K562 (cell line): ENCODE measurements at regions of chr5 and their contacts with region 1.

Region 1: GRCh38 chr5:178838695-178839685 is 20.8 kb upstream of the ZNF354B start:
- DNase-seq: peak; percentile 27 to 57 (median 32)
- ATAC-seq: peak; percentile 96
- H3K4me3 ChIP-seq: no peak overlapping the region
- H3K27ac ChIP-seq: no peak overlapping the region
- H3K4me1 ChIP-seq: peaks cover 0 to 5% of the 10 kb centered on the region in 2 experiments; a peak in 1 of 5 replicates
- H3K27me3 ChIP-seq: peaks cover 0 to 4% of the 10 kb centered on the region in 2 experiments; a peak in 1 of 5 replicates
- CTCF ChIP-seq: peak; percentile 69 to 70 (median 69)
- EP300 ChIP-seq: no peak
- POLR2A ChIP-seq: no peak
- RAD21 ChIP-seq: peak; percentile 54 to 68

Region 2: GRCh38 chr5:178232124-178232919 is 606.7 kb before region 1 on chr5 and contains the start of gene PHYKPL:
- CTCF ChIA-PET with region 1: interaction called, 4 read pairs
- POLR2A ChIA-PET with region 1: no interaction called
- in situ Hi-C with region 1: no loop called
- intact Hi-C with region 1: loop called (anchors 5 kb)
- DNase-seq: peak; percentile 77 to 92 (median 86)
- ATAC-seq: peak; percentile 79
- H3K4me3 ChIP-seq: peak within 1 kb of the TSS; percentile 93
- H3K27ac ChIP-seq: peak within 1 kb of the TSS; percentile 87
- H3K4me1 ChIP-seq: peaks cover 31 to 39% of the 10 kb centered on the region in 2 experiments
- H3K27me3 ChIP-seq: no peaks in the 10 kb centered on the region
- CTCF ChIP-seq: peak in 2 of 3 experiments; percentile 14 to 61; a peak in 2 of 6 replicates
- EP300 ChIP-seq: no peak
- POLR2A ChIP-seq: peak; percentile 76
- RAD21 ChIP-seq: no peak
- polyA plus RNA-seq, gene PHYKPL: 4.7 to 6.5 TPM

Region 3: DNA sequence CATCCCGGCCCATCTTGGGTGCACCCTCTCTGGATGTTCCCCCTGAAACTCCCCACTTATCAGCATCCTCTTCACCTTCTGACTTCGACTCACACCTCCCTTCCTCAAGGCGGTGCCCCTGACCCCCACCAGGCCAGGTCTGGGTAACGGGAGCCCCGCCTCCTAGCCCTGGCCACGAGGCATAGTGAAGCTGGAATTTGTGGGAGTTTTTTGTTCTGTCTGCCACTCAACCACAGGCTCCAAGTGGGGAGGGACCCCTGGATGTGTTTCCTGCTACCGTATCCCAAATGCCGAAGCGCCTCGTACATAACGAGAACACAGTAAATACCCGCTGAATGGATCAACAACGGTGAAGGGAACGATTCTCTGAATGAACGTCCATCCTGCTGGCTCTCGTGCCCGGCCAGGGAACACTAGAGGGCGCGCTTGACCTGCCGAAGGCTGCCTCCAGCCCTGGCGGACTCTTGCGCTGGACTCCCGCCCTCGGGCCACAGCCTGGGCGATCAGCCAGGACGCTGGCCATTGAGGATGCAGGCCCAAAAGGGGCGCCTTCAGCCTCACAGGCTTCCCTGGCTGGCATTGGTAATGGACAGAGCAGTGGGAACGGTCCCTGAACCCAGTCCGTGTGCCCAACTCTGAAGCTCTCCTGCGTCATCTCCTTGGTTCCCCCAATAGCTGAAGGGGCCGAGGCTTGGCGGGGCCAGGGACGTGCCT is 559.1 kb before region 1 on chr5:
- CTCF ChIA-PET with region 1: interaction called, 3 read pairs
- POLR2A ChIA-PET with region 1: no interaction called
- in situ Hi-C with region 1: loop called (anchors 25 kb)
- intact Hi-C with region 1: loop called (anchors 5 kb)
- DNase-seq: peak; percentile 85 to 89 (median 87)
- ATAC-seq: peak; percentile 99
- H3K4me3 ChIP-seq: no peak overlapping the region
- H3K27ac ChIP-seq: no peak overlapping the region
- H3K4me1 ChIP-seq: peaks cover 0 to 12% of the 10 kb centered on the region in 2 experiments; a peak in 3 of 5 replicates
- H3K27me3 ChIP-seq: peaks cover 12 to 64% of the 10 kb centered on the region in 2 experiments; a peak in 4 of 5 replicates
- CTCF ChIP-seq: peak; percentile 96 to 97 (median 96)
- EP300 ChIP-seq: no peak
- POLR2A ChIP-seq: no peak
- RAD21 ChIP-seq: peak; percentile 93 to 98

Region 4: DNA sequence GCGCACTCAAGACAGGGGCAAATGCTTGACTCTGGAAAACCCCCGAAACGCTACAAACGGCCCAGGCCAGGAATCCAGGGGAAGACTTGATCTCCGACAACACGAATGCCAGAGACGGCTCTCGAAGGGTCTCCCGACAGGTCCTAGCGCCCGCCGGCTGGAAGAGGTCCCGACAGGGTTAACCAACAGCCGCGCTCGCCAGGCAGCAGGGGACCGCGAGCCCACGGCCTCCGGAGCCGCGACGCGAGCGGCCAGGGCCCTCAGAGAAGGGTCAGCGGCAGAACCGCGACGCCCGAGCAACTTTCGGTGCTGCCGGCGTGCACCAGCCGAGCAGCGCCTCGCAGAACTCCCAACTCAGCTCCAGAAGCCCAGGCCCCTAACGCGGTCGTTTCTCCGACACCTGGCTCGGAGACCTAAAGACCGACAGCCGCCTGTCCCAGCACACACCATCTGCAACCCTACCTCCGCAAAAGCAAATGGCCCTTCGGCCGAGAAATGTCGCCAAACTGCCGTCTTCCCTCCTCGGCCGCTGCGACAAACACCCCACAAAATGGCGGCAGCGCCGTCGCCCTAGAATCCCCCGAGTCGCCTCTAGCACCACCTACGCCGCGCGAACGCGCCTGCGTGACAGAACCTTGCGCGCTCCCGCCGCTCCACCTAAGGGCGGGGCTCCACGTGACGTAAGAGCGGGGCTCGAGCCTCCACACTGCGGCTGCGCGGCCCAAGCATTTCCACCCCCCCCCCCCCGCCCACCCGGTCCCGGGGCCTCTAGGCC is 212.3 kb before region 1 on chr5 and contains the start of gene CLK4:
- CTCF ChIA-PET with region 1: no interaction called
- POLR2A ChIA-PET with region 1: no interaction called
- in situ Hi-C with region 1: no loop called
- intact Hi-C with region 1: loop called (anchors 10 kb)
- DNase-seq: peak; percentile 96 to 98 (median 97)
- ATAC-seq: peak; percentile 90
- H3K4me3 ChIP-seq: peak within 1 kb of the TSS; percentile 96
- H3K27ac ChIP-seq: peak within 1 kb of the TSS; percentile 84
- H3K4me1 ChIP-seq: peaks cover 4 to 5% of the 10 kb centered on the region in 2 experiments; a peak in 3 of 5 replicates
- H3K27me3 ChIP-seq: peaks cover 0 to 4% of the 10 kb centered on the region in 2 experiments; a peak in 1 of 5 replicates
- CTCF ChIP-seq: no peak; a peak in 1 of 6 replicates
- EP300 ChIP-seq: no peak
- POLR2A ChIP-seq: peak; percentile 95
- RAD21 ChIP-seq: no peak
- polyA plus RNA-seq, gene CLK4: 12.9 to 13.9 TPM

Region 5: DNA sequence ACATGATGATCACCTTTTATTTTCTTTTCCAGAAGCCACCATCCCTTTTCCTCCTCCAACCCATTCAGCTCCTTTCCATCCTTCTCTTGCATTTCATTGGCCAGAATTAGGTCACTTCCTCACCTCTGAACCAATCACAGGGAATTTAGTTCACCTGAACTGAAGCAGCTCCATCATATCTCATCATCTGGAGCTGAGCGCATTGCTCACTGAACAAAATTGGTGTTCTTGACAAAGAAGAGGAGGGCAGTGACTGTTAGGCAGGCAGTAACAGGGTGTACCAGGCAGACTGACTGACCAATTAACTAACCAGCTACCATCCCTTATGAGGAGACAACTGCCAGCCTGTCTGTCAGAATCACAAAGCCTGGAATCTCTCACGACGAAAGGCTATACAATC is 106.7 kb before region 1 on chr5:
- CTCF ChIA-PET with region 1: interaction called, 8 read pairs
- POLR2A ChIA-PET with region 1: no interaction called
- in situ Hi-C with region 1: no loop called
- intact Hi-C with region 1: loop called (anchors 2 kb)
- DNase-seq: no peak
- ATAC-seq: no peak
- H3K4me3 ChIP-seq: no peak overlapping the region
- H3K27ac ChIP-seq: no peak overlapping the region
- H3K4me1 ChIP-seq: peaks cover 0 to 11% of the 10 kb centered on the region in 2 experiments; a peak in 2 of 5 replicates
- H3K27me3 ChIP-seq: no peaks in the 10 kb centered on the region
- CTCF ChIP-seq: no peak
- EP300 ChIP-seq: no peak
- POLR2A ChIP-seq: no peak
- RAD21 ChIP-seq: no peak

Region 6: DNA sequence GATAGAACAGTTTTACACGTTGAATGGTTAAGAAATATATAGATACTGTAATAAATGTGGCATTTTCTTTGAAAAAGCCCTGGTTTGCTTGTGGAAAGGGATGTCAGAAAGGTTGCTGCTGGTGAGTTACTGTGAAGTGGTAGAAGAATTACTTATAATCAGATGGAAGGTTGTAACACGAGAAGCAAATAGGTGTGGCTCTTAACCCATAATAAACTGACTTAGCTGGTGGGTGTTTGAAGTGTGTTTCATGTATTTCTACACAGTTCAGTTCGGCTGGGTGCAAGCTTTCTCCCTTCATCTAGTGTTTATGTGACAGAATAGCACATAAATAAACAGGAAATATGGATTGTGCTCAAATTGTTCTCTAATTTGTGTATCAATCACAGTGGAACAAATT is 1660.7 kb after region 1 on chr5:
- CTCF ChIA-PET with region 1: no interaction called
- POLR2A ChIA-PET with region 1: no interaction called
- in situ Hi-C with region 1: no loop called
- intact Hi-C with region 1: no loop called
- DNase-seq: peak in 2 of 4 experiments; percentile 17 to 26
- ATAC-seq: peak; percentile 57
- H3K4me3 ChIP-seq: no peak overlapping the region
- H3K27ac ChIP-seq: no peak overlapping the region
- H3K4me1 ChIP-seq: peaks cover 27 to 29% of the 10 kb centered on the region in 2 experiments
- H3K27me3 ChIP-seq: no peaks in the 10 kb centered on the region
- CTCF ChIP-seq: no peak
- EP300 ChIP-seq: no peak
- POLR2A ChIP-seq: no peak
- RAD21 ChIP-seq: no peak

Region 7: DNA sequence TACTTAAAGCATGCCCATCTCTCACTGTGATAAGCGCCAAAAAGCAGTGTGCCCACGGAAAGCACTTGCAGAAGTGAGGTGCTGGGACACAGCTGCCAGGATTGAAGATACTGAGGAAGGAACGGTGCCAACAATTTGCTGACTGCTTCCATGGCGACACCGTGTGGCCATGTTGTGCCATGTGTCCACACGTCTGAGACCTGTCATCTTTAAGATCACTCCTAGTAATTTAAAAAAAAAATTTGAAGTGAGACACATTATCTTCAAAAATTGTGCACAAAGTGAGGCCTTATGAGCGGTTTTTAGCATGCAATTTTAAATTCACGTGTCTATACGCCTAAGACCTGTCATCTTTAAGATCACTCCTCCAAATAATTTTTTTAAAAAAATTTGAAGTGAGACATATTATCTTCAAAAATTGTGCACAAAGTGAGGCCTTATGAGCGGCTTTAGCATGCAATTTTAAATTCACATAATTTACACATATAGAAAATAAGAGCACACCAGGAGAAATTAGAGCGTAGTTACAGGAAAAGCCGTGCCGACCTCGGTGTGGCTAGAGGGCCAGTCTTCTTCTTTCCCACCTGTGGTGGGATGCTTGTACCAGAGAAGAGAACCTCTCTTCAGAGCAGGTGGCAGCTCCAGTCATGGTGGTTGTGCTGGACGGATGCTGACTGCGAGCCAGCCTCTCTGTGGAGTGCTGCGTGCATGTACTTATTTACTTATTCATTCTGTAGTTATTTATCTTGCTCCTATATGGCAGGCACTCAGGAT is 1831.8 kb after region 1 on chr5:
- CTCF ChIA-PET with region 1: no interaction called
- POLR2A ChIA-PET with region 1: no interaction called
- in situ Hi-C with region 1: loop called (anchors 5 kb)
- intact Hi-C with region 1: no loop called
- DNase-seq: peak; percentile 49 to 73 (median 66)
- ATAC-seq: peak; percentile 76
- H3K4me3 ChIP-seq: no peak overlapping the region
- H3K27ac ChIP-seq: no peak overlapping the region
- H3K4me1 ChIP-seq: peaks cover 18 to 20% of the 10 kb centered on the region in 2 experiments
- H3K27me3 ChIP-seq: peaks cover 9 to 33% of the 10 kb centered on the region in 2 experiments; a peak in 4 of 5 replicates
- CTCF ChIP-seq: peak; percentile 69 to 86 (median 85)
- EP300 ChIP-seq: no peak
- POLR2A ChIP-seq: no peak
- RAD21 ChIP-seq: peak; percentile 47 to 77